Aorta (tissue), 5 donors: ENCODE measurements at regions of chr1 and their contacts with region 1.

Region 1: DNA sequence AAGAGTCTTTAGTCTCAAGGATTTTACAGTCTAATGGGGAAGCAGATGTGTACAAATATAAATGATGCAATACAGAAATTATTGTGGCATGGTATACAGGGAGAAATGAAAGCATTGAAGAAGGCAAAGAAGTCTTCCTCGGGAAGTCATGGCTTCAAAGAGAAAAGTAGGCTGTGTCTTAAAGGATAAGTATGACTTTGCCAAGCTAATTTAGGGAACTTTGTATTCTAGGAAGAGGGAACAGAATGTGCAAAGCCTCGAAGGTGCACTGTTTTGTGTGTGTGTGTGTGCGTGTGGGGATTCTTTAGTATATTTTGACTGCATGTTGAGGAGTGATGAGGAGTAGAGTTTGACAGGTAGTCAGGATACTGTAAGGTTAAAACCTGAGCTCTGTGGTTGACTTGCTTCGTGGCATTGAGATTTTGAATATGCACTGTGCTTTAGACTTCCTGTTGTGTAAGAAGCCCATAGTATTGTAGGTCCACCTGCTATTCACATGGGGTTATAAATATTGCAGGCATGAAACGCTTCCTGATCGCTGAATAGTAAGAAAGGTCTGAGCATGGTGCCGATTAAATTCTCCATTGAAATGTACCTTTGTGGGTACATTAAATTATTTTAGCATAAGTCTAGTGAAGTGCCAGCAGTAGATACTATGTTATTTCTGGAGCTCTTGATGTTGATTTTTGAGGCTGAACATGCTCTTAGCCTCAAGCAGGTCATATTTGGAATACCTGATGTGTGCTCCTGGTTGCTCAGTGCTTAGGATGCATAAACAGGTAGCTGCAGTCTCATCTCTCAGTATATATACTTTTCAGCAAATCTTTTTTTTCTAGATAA is 8.0 kb downstream of the SMAP2 start:
- DNase-seq: no peak
- ATAC-seq: no peak
- H3K4me3 ChIP-seq: no peak overlapping the region
- H3K27ac ChIP-seq: no peak overlapping the region
- H3K4me1 ChIP-seq: peaks cover 0 to 1% of the 10 kb centered on the region in 2 donors
- H3K27me3 ChIP-seq: no peaks in the 10 kb centered on the region

Region 2: DNA sequence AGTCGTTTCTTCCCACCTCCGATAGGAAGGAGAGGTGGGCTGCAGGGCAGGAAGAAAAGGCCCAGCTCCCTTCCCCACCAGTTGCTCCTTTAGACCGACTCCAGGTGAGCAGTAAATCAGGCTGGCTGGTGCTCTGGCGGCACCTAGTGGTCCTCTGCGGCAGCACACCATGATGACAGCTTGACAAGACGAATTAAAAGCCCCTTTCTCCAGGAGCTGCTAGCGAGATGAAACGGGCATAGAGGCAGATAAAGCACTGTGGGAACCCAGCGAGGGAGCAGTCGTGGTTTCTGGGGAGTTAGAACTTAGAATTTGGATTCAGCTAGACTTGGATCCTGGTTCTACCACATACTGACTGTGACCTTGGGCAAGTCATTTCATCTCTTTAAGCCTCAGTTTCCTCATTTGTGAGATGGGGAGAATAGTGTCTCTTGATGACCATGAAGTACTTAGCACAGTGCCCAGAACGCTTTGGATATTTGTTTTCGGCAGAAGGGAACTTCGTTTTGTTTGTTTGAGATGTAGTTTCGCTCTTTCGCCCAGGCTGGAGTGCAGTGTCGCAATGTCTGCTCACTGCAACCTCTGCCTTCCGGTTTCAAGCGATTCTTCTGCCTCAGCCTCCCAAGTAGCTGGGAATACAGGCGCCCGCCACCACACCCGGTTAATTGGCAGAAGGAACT is 42.6 kb before region 1 on chr1:
- intact Hi-C with region 1: no loop called
- DNase-seq: peak; percentile 82 to 92
- ATAC-seq: peak; percentile 88
- H3K4me3 ChIP-seq: no peak overlapping the region
- H3K27ac ChIP-seq: no peak overlapping the region
- H3K4me1 ChIP-seq: no peaks in the 10 kb centered on the region
- H3K27me3 ChIP-seq: no peaks in the 10 kb centered on the region

Region 3: DNA sequence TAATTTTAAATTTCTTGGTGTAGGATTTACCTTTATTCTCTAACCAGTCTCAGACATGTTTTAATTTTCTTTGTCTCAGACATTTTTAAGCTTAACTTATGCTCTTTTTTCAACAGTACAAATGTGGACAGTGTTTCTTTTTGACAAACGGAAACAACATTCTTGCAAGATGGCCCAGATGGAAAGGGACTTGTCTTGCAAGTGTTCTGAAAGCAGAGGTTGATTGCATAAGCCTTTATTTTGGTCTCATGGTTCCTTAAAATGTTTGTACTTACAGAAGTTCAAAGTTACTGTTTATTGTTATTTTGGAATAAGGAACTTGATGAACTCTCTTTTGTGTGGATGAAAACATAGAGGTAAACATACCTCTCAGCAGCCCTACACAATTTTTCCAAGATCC is 14.9 kb after region 1 on chr1:
- intact Hi-C with region 1: loop called in 1 of 2 experiments (anchors 1 kb)
- DNase-seq: no peak
- ATAC-seq: no peak
- H3K4me3 ChIP-seq: no peak overlapping the region
- H3K27ac ChIP-seq: no peak overlapping the region
- H3K4me1 ChIP-seq: peaks cover 1 to 3% of the 10 kb centered on the region in 2 donors
- H3K27me3 ChIP-seq: no peaks in the 10 kb centered on the region